Dorsolateral prefrontal cortex (tissue), 120 donors: ENCODE measurements at regions of chr5 and their contacts with region 1.

Region 1: DNA sequence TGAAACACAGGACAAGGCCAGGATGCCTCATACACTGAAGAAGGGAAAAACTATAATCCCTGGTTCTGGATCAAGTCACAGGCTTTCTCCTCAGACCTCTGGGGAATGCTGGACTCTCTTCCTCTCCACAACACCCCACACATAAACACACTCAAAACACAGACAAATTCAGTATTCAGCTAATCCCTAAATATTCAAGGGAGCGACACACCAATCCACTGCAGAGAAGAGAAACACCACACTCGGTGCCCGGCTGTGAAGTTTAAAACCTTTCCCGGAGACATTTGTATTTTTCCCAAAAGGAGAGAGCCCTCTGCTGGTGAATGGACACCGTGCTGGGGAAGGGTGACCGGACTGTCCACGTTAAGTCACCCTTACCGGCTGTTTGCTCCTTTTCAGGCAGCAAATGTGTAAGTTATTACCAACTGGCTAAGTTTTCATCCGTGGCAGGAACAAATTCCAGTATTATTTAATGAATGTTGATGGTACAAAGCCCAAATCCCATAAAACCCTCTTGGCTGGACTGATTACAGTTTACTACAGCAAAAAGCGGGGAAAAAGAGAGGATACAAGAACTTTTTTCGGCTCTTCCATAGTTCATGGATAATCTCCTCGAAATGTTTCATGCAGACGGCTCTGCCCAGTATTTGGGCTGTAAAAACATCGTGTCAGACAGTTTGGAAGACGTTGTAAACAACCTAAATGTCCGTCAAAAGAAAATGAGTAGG is 130.9 kb upstream of the SLC30A5 start:
- DNase-seq: peak; percentile 28 to 76 (median 65)
- H3K4me3 ChIP-seq: peak overlapping the region in 10 of 59 donors; percentile 0 to 38 (median 24)
- H3K27ac ChIP-seq: peak overlapping the region in 47 of 59 donors; percentile 3 to 78 (median 53)
- H3K27me3 ChIP-seq: no peaks in the 10 kb centered on the region
- CTCF ChIP-seq: peak; percentile 66 to 98 (median 89)

Region 2: GRCh38 chr5:68303038-68303738 is 659.7 kb before region 1 on chr5:
- intact Hi-C with region 1: loop called in 1 of 2 experiments (anchors 5 kb)
- DNase-seq: no peak
- H3K4me3 ChIP-seq: no peak overlapping the region
- H3K27ac ChIP-seq: peak overlapping the region in 19 of 59 donors; percentile 2 to 66 (median 25)
- H3K27me3 ChIP-seq: no peaks in the 10 kb centered on the region
- CTCF ChIP-seq: no peak

Region 3: GRCh38 chr5:68818057-68818695 is 144.7 kb before region 1 on chr5:
- intact Hi-C with region 1: loop called in 1 of 2 experiments (anchors 5 kb)
- DNase-seq: peak; percentile 36 to 83 (median 74)
- H3K4me3 ChIP-seq: peak overlapping the region in 15 of 59 donors; percentile 2 to 39 (median 13)
- H3K27ac ChIP-seq: peak overlapping the region in 58 of 59 donors; percentile 4 to 94 (median 83)
- H3K27me3 ChIP-seq: no peaks in the 10 kb centered on the region
- CTCF ChIP-seq: peak in 14 of 56 donors; percentile 8 to 42 (median 18)

Region 4: DNA sequence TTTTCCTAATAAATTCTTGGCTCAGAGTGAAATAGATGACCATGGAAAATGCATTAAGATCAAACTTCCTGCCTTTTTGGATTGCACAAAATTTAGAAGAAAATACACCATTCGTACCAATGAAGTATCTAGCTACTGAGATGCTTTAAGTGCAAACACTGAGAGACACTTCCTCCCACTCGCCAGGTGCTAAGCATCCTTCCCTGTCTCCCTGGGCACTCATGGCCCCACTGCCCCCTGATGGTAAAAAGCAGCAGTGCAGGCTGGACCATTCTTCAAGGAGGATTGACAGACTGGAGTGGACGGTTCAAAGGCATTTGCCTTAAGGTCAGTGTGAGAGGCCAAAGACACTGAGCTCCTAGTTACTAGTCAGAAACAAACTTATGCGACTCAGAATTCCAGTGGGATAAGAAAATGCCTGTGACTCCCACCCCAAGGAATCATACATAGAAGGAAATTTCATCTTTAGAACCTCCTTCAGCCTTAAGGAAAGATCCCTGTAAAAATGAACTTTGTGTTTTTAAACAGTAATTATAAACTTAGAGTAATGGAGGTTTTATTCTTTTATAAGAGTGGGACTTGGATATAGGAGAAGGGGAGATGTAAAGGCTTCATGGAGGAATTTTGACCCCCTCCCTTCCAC is 44.9 kb after region 1 on chr5:
- intact Hi-C with region 1: no loop called
- DNase-seq: peak; percentile 52 to 90 (median 76)
- H3K4me3 ChIP-seq: peak overlapping the region in 2 of 59 donors; percentile 2 to 20
- H3K27ac ChIP-seq: peak overlapping the region in 56 of 59 donors; percentile 12 to 94 (median 76)
- H3K27me3 ChIP-seq: no peaks in the 10 kb centered on the region
- CTCF ChIP-seq: peak; percentile 58 to 88 (median 77)